ENCODE measurements at regions of chr12 and their contacts with region 1.

Region 1: DNA sequence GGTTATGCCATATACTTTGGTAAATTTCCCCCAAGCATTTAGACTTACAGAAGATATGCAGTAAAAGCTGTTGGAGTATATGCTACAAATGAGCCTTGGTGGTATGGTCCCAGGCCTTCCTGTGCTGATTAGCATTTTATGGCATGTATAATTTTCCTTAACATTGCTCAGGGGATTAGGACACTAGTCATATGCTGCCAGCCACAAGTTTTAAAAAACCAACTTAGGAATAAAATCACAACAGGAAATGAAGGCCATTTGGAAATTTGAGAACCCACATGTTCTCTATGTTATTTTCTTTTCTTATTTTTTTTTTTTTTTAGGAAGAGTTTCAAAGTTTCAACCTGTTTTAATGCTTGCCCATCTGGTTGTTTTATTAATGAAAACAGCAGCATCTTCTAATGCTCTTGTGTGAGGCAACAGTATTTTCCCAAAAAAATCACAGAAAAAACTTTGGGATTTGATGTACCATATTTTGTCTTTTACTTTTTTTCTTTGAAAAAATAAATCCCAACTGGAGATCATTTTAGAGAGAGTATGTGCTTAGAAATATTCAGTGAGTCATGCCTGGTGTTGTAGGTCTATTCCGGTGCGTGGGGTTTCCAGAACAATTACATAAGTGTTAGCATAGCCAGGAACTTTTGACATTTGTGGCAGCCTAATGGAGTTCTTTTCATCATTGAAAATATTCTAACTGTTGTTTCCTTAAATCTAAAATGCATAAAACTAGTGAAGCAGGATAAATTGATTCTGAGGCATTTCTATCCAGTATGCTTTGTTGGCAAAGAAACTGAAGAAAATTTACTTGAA is 21.7 kb upstream of the DUSP6 start:
- DNase-seq: no peak
- ATAC-seq: no peak
- H3K4me3 ChIP-seq: no peak overlapping the region
- H3K27ac ChIP-seq: no peak overlapping the region
- H3K4me1 ChIP-seq: peaks cover 87% of the 10 kb centered on the region
- H3K27me3 ChIP-seq: no peaks in the 10 kb centered on the region
- CTCF ChIP-seq: no peak
- EP300 ChIP-seq: no peak
- POLR2A ChIP-seq: no peak
- RAD21 ChIP-seq: no peak

Region 2: GRCh38 chr12:89345830-89346740 is 27.9 kb before region 1 on chr12:
- CTCF ChIA-PET with region 1: no interaction called
- POLR2A ChIA-PET with region 1: interaction called, 430 read pairs
- in situ Hi-C with region 1: no loop called
- intact Hi-C with region 1: no loop called
- DNase-seq: no peak
- ATAC-seq: peak; percentile 41
- H3K4me3 ChIP-seq: 0 out of 6 replicates have a peak overlapping the region, but pooled peaks of 1 of the 3 experiments have one; percentile 7
- H3K27ac ChIP-seq: peak overlapping the region; percentile 89
- H3K4me1 ChIP-seq: peaks cover 66% of the 10 kb centered on the region
- H3K27me3 ChIP-seq: peaks cover 0 to 9% of the 10 kb centered on the region in 2 experiments; a peak in 1 of 5 replicates
- CTCF ChIP-seq: no peak
- EP300 ChIP-seq: no peak
- POLR2A ChIP-seq: no peak
- RAD21 ChIP-seq: no peak

Region 3: GRCh38 chr12:89358805-89359204 is 15.2 kb before region 1 on chr12:
- CTCF ChIA-PET with region 1: no interaction called
- POLR2A ChIA-PET with region 1: interaction called, 430 read pairs
- in situ Hi-C with region 1: no loop called
- intact Hi-C with region 1: loop called (anchors 1 kb)
- DNase-seq: no peak
- ATAC-seq: no peak
- H3K4me3 ChIP-seq: no peak overlapping the region
- H3K27ac ChIP-seq: no peak overlapping the region
- H3K4me1 ChIP-seq: peaks cover 82% of the 10 kb centered on the region
- H3K27me3 ChIP-seq: no peaks in the 10 kb centered on the region; a peak in 1 of 5 replicates
- CTCF ChIP-seq: no peak
- EP300 ChIP-seq: no peak
- POLR2A ChIP-seq: no peak
- RAD21 ChIP-seq: no peak

Region 4: GRCh38 chr12:89389755-89390661 is 16.0 kb after region 1 on chr12:
- CTCF ChIA-PET with region 1: no interaction called
- POLR2A ChIA-PET with region 1: interaction called, 39 read pairs
- in situ Hi-C with region 1: no loop called
- intact Hi-C with region 1: no loop called
- DNase-seq: peak; percentile 62
- ATAC-seq: peak; percentile 77
- H3K4me3 ChIP-seq: peak overlapping the region; percentile 13 to 52 (median 27); a peak in 3 of 6 replicates
- H3K27ac ChIP-seq: peak overlapping the region; percentile 75
- H3K4me1 ChIP-seq: peaks cover 82% of the 10 kb centered on the region
- H3K27me3 ChIP-seq: no peaks in the 10 kb centered on the region
- CTCF ChIP-seq: no peak
- EP300 ChIP-seq: peak in 1 of 2 experiments; percentile 32; a peak in 1 of 4 replicates
- POLR2A ChIP-seq: no peak
- RAD21 ChIP-seq: no peak